ENCODE measurements at regions of chr6 and their contacts with region 1.

Region 1: DNA sequence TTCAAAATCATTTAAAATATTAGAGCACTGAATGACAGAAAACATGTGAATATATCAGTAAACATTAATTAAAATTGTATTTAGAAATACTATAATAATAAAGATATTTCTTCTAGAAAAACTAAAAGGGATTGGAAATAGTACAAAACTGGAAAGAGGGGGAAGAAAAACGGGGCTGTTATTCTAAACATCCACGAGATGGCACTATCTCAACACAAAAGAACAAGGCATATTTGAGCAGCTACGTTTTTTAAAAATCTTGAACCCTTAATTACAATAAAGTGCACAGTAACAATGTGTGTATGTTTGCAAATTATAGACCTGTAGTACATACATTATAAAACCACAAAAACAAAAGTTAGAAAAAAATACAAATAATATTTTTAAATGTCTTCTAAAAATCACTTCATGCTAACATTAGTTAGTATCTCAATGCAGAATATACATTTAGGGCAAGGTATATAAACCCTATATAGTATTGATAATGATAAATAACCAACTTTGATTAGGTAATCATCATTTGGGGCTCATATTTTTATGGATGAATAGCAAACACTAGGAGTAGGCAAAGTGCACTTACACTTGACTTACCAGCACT is 42.5 kb upstream of the PNISR start:
- DNase-seq: no peak
- H3K4me3 ChIP-seq: no peak overlapping the region
- H3K27ac ChIP-seq: no peak overlapping the region
- H3K27me3 ChIP-seq: no peaks in the 10 kb centered on the region
- CTCF ChIP-seq: peak; percentile 32 to 92 (median 73)

Region 2: DNA sequence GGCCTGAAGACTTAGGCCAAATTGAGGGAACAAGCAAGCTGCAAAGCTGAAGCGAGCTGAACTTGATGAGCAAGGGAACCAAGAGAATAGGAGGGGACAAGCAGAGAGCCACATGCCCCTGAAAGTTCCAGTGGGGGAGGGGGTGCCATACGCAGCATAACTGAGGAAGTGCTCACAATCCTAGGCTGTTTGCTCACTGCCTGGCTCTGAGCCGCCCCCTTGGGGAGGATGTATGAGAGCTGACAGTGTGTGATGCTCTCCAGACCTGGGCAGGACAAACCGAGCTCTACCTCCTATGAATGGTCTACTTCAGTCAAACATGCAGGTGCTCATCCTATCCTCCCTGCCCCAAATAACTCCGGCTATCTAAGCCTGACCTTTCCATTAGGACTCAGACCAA is 170.2 kb before region 1 on chr6:
- intact Hi-C with region 1: no loop called
- DNase-seq: no peak
- H3K4me3 ChIP-seq: no peak overlapping the region
- H3K27ac ChIP-seq: no peak overlapping the region
- H3K27me3 ChIP-seq: no peaks in the 10 kb centered on the region
- CTCF ChIP-seq: no peak

Region 3: DNA sequence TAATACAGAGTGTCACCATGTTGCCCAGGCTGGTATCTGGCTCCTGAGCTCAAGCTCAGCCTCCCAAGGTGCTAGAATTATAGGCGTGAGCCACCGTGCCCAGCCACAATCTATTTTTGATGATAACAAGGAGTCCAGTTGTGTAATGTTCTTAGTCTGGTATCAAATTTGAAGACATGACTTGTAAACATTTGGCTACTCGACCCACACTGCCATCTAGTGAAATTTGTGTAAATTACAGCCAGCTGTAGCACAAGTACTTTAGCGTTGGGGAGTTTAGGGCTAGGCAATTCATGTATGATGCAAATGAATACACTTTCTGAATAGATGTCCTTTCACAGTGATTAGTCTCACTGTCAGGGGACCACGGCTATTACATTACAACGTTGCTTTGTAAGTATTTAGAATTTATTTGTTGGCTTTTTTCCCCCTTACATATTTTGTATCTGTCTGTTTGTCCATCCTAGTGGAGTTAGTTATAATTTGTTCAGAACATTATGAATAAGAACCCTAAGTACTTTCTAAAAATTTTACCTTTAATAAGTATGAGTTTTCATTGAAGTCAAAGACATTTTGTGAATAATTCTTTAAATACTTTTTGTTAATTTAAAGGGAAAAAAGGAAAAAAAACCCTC is 278.8 kb after region 1 on chr6:
- intact Hi-C with region 1: loop called (anchors 5 to 10 kb)
- DNase-seq: peak in 4 of 10 donors; percentile 41 to 76 (median 60)
- H3K4me3 ChIP-seq: no peak overlapping the region
- H3K27ac ChIP-seq: no peak overlapping the region
- H3K27me3 ChIP-seq: peaks cover 0 to 17% (median 0%) of the 10 kb centered on the region in 45 donors
- CTCF ChIP-seq: peak; percentile 68 to 96 (median 87)

Region 4: DNA sequence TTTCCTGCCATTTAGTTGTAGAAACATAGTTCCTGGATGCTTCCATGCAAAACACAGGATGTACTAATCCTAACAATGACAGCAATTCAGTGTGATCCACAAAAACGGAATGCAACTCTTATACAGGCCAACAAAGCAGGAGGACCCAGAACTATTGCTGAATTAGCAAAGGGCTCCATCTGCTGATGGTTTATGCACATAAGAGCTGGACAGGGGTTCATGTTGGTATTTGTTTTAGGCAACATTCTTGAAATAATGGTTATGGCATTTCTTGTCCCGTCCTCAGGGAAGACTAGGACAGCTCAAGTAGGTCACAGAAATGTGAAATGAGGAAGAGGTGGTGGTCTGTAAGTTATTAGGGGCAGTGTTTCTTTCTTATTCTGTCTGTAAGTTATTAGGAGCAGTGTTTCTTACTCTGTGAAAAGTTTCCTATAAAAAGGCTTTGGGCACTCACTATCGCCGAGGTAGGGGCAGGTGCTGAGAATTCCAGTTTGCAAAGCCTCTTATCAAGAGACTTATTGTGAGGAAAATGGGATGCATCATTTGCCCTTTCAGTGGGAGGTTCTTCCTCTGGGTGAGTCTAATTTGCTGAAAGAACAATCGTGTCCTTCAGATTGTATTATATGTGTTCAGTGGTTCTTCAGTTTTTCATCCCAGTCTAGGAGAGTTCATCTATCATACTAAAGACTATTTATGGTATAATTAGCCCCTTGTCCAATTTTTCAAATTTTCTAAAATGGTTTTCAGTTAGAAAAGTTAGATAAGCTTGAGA is 355.3 kb after region 1 on chr6:
- intact Hi-C with region 1: loop called in 1 of 2 experiments (anchors 5 kb)
- DNase-seq: peak in 3 of 10 donors; percentile 9 to 26 (median 10)
- H3K4me3 ChIP-seq: peak overlapping the region in 29 of 59 donors; percentile 0 to 56 (median 29)
- H3K27ac ChIP-seq: no peak overlapping the region
- H3K27me3 ChIP-seq: peaks cover 0 to 25% (median 0%) of the 10 kb centered on the region in 45 donors
- CTCF ChIP-seq: peak in 53 of 56 donors; percentile 24 to 66 (median 51)

Region 5: DNA sequence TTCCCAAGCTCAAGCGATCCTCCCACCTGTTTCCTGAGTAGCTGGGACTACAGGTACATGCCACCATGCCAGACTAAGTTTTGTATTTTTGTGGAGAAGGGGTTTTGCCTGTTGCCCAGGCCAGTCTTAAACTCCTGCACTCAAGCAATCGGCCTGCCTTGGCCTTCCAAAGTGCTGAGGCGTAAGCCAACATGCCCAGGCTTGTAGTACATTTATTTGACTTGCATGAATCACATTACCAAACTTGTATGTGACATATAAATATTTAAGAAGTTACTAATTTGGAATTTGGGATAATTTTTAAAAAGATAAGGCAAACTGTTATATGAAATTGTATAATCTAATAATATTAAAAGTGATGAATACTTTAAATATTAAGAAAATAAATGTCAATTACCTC is 368.9 kb after region 1 on chr6:
- intact Hi-C with region 1: loop called in 1 of 2 experiments (anchors 10 kb)
- DNase-seq: no peak
- H3K4me3 ChIP-seq: no peak overlapping the region
- H3K27ac ChIP-seq: no peak overlapping the region
- H3K27me3 ChIP-seq: no peaks in the 10 kb centered on the region
- CTCF ChIP-seq: no peak

Measured in dorsolateral prefrontal cortex (tissue), 120 donors.